Heart left ventricle (tissue), 16 donors: ENCODE measurements at regions of chr5 and their contacts with region 1.

Region 1: GRCh38 chr5:93582677-93583438 is at the start of gene NR2F1:
- DNase-seq: no peak
- ATAC-seq: peak in 2 of 4 donors; percentile 23 to 28
- H3K4me3 ChIP-seq: peak within 1 kb of the TSS in 10 of 12 donors; percentile 40 to 74 (median 53)
- H3K27ac ChIP-seq: peak within 1 kb of the TSS in 2 of 12 donors; percentile 24 to 60
- H3K4me1 ChIP-seq: peaks cover 5 to 57% (median 28%) of the 10 kb centered on the region in 12 donors
- H3K27me3 ChIP-seq: peaks cover 52 to 86% (median 74%) of the 10 kb centered on the region in 9 donors
- CTCF ChIP-seq: no peak
- POLR2A ChIP-seq: no peak
- total RNA-seq, gene NR2F1: 0.37 to 13.5 (median 0.68) TPM in 6 of 9 donors, not detected in the others

Region 2: DNA sequence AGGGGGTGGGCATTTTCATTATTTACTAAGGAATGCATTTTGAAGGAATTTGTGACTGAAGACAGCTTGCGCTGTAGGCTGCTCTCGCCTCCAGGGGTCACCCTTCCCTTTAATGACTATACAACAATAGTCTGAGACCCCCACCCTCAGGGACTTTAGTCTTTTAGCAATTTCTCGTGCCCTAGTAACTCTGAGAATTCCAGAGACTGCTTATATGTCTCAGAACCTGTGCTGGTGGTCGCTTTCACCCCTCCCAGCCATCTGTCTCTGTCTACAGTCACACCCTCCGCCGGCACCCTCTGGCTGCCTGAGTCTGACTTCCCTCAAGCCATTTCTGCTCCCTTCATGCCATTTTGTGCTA is 673.3 kb before region 1 on chr5:
- intact Hi-C with region 1: loop called in 1 of 10 experiments (anchors 10 kb)
- DNase-seq: no peak
- ATAC-seq: no peak
- H3K4me3 ChIP-seq: no peak overlapping the region
- H3K27ac ChIP-seq: no peak overlapping the region
- H3K4me1 ChIP-seq: peaks cover 0 to 22% (median 2%) of the 10 kb centered on the region in 12 donors
- H3K27me3 ChIP-seq: no peaks in the 10 kb centered on the region
- CTCF ChIP-seq: peak in 9 of 12 donors; percentile 16 to 51 (median 31)
- POLR2A ChIP-seq: no peak

Region 3: DNA sequence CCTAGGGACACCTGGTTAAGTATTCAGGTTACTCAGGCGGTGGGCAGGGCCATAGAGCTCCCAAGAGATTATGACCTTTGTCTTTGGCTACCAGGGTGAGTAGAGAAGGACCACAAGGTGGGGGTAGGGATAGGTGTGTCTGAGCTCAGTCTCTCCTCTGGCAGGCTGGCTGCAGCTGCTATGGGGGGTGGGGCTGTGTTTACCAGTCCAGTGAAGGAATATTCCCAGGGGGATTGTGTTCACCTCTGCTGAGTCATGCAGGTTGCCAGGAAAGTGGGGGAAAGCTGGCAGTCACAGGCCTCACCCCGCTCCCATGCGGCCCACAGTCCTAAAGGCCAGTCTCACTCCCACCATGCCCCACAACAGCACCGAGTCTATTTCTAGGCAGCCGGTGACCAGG is 212.1 kb after region 1 on chr5:
- intact Hi-C with region 1: loop called in 9 of 10 experiments (anchors 2 to 5 kb)
- DNase-seq: no peak
- ATAC-seq: no peak
- H3K4me3 ChIP-seq: no peak overlapping the region
- H3K27ac ChIP-seq: no peak overlapping the region
- H3K4me1 ChIP-seq: no peaks in the 10 kb centered on the region
- H3K27me3 ChIP-seq: no peaks in the 10 kb centered on the region
- CTCF ChIP-seq: no peak
- POLR2A ChIP-seq: no peak

Region 4: GRCh38 chr5:93874080-93874479 is 291.2 kb after region 1 on chr5:
- intact Hi-C with region 1: no loop called
- DNase-seq: no peak
- ATAC-seq: no peak
- H3K4me3 ChIP-seq: no peak overlapping the region
- H3K27ac ChIP-seq: no peak overlapping the region
- H3K4me1 ChIP-seq: no peaks in the 10 kb centered on the region
- H3K27me3 ChIP-seq: no peaks in the 10 kb centered on the region
- CTCF ChIP-seq: no peak
- POLR2A ChIP-seq: no peak

Region 5: DNA sequence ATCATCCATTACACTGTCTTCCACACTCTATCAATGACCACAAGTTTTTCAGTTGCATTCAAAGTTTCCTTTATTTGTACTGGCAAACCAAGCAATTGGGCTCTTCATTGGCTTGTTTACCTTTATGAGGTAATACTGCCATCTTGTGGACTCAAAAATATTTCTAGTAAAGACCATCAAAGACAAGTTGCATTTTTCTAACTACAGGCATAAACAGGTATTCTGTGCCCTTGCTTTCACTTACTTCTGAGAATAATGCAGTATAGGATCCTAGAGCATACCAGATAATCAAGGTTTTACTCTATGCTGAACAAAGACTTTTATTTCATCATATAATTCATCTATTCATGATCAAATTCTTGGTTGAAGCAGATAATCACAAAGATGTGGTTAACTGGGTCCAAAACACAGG is 332.3 kb after region 1 on chr5:
- intact Hi-C with region 1: loop called in 2 of 10 experiments (anchors 10 kb)
- DNase-seq: no peak
- ATAC-seq: no peak
- H3K4me3 ChIP-seq: no peak overlapping the region
- H3K27ac ChIP-seq: no peak overlapping the region
- H3K4me1 ChIP-seq: no peaks in the 10 kb centered on the region
- H3K27me3 ChIP-seq: no peaks in the 10 kb centered on the region
- CTCF ChIP-seq: peak; percentile 21 to 62 (median 50)
- POLR2A ChIP-seq: no peak

Region 6: GRCh38 chr5:94740286-94740685 is 1157.4 kb after region 1 on chr5:
- intact Hi-C with region 1: loop called in 2 of 10 experiments (anchors 5 to 10 kb)
- DNase-seq: no peak
- ATAC-seq: no peak
- H3K4me3 ChIP-seq: no peak overlapping the region
- H3K27ac ChIP-seq: no peak overlapping the region
- H3K4me1 ChIP-seq: no peaks in the 10 kb centered on the region
- H3K27me3 ChIP-seq: no peaks in the 10 kb centered on the region
- CTCF ChIP-seq: no peak
- POLR2A ChIP-seq: no peak